H1 (cell line): ENCODE measurements at regions of chr5 and their contacts with region 1.

Region 1: GRCh38 chr5:134527146-134527960 is 1.9 kb downstream of the JADE2 start:
- DNase-seq: peak; percentile 91 to 93
- H3K4me3 ChIP-seq: peak overlapping the region; percentile 68 to 85 (median 77)
- H3K27ac ChIP-seq: peak overlapping the region; percentile 62
- H3K4me1 ChIP-seq: peaks cover 21 to 38% (median 27%) of the 10 kb centered on the region in 4 experiments
- H3K27me3 ChIP-seq: no peaks in the 10 kb centered on the region
- CTCF ChIP-seq: peak in 2 of 3 experiments; percentile 76 to 81; a peak in 3 of 4 replicates
- EP300 ChIP-seq: no peak
- POLR2A ChIP-seq: no peak; a peak in 1 of 3 replicates
- RAD21 ChIP-seq: peak; percentile 58 to 75

Region 2: DNA sequence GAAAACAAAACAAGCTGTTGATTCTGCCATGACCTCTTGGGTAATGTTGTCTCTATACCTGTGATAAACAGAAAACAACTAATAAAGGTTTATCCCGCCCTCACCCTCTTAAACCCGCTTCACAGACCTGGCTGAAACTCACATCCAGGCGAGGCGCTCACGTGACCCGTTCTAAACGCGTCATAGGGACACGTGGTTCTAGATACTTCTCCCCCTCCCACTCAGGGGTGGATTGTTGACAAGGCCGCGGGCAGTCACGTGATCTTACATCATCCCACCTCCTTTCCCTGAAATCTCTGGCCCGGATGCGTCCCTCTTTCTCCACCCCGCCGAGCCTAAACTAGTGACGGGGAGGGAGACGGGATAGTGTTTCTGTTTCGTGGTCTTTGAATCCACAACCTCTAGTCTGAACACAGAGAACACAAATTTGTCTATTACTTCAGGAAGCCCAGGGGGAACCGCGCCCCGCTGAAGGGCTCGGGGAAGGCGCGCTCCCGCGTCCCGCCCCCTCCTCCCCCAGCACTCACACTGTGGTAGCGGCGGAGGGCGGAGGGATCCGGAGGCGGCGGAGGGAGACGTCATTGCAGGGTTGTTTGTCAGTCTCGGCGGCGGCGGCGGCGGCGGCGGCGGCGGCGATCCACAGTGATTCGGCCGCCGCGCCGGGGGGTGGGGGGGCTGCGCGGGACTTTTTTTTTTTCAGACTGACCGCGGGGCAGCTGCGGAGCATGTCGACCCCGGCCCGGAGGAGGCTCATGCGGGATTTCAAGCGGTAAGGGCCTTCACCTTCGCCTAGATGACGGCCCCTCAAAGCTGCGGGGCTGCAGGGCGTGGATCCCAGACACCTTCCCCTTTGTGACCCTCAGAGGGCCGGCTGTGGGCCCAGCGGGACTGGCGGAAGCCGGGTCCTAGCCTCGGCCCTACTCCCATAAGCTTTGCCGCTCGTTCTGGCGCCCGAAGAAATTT is 156.2 kb before region 1 on chr5 and contains the start of gene UBE2B:
- CTCF ChIA-PET with region 1: interaction called, 3 read pairs
- POLR2A ChIA-PET with region 1: interaction called, 14 read pairs
- DNase-seq: peak; percentile 92 to 97
- H3K4me3 ChIP-seq: peak within 1 kb of the TSS; percentile 83 to 97 (median 91)
- H3K27ac ChIP-seq: peak within 1 kb of the TSS; percentile 98
- H3K4me1 ChIP-seq: no peaks in the 10 kb centered on the region; a peak in 3 of 7 replicates
- H3K27me3 ChIP-seq: no peaks in the 10 kb centered on the region
- CTCF ChIP-seq: no peak
- EP300 ChIP-seq: peak in 1 of 2 experiments; percentile 99; a peak in 2 of 3 replicates
- POLR2A ChIP-seq: peak; percentile 24 to 68
- RAD21 ChIP-seq: no peak
- total RNA-seq, gene UBE2B: 40.3 and 46.8 TPM in 2 replicates

Region 3: DNA sequence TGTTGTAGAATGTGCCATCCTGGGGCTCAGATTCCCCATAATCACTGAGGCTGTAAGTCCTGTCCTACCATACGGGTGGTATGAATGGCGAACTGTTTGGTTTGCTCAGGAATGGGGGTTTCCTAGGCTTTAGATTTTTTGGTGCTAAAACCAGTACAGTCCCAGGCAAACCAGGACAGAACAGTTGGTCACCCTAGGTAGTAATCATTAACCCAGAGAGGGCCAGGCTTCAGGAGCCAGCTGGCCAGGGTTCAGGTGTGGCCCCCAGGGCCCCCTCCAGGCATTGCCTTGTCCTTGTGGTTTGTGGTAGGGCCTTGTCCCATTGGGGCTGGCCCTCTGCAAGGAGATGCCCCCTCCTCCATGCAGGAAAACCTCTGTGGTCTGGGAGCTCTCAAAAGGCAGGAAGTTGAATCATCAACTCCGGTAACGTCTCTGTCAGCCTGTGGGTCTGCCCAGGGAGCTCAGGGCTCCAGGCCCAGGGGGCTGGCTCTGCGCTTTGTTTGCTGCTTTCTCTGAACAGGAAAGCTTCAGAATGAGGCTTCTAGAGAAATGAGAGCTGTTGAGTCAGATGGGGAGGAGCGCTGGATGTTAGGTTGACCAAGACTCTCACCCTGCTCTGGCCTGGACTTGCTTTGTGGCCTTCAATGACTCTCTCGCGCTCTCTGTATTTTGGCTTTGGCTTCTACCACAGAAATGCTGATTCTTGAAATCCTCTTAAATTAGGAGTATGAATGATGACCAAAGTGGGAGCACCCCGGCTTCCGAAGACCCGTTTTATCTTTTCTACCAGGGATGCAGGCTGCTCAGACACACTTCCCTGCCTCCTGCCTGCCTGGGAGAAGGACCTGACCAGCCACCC is 24.0 kb before region 1 on chr5:
- CTCF ChIA-PET with region 1: interaction called, 18 read pairs
- POLR2A ChIA-PET with region 1: interaction called, 131 read pairs
- DNase-seq: peak in 1 of 2 experiments; percentile 59
- H3K4me3 ChIP-seq: no peak overlapping the region
- H3K27ac ChIP-seq: peak overlapping the region; percentile 18; the same call in 1 of the 2 replicates
- H3K4me1 ChIP-seq: peaks cover 3 to 19% (median 16%) of the 10 kb centered on the region in 4 experiments; a peak in 6 of 7 replicates
- H3K27me3 ChIP-seq: no peaks in the 10 kb centered on the region
- CTCF ChIP-seq: no peak
- EP300 ChIP-seq: no peak
- POLR2A ChIP-seq: no peak
- RAD21 ChIP-seq: no peak

Region 4: GRCh38 chr5:134541736-134542376 is 14.5 kb after region 1 on chr5:
- CTCF ChIA-PET with region 1: interaction called, 121 read pairs
- POLR2A ChIA-PET with region 1: interaction called, 74 read pairs
- DNase-seq: peak in 1 of 2 experiments; percentile 85
- H3K4me3 ChIP-seq: no peak overlapping the region
- H3K27ac ChIP-seq: no peak overlapping the region
- H3K4me1 ChIP-seq: peaks cover 6 to 17% (median 9%) of the 10 kb centered on the region in 4 experiments
- H3K27me3 ChIP-seq: no peaks in the 10 kb centered on the region
- CTCF ChIP-seq: no peak
- EP300 ChIP-seq: no peak
- POLR2A ChIP-seq: no peak
- RAD21 ChIP-seq: peak in 1 of 2 experiments; percentile 23; a peak in 2 of 4 replicates

Region 5: DNA sequence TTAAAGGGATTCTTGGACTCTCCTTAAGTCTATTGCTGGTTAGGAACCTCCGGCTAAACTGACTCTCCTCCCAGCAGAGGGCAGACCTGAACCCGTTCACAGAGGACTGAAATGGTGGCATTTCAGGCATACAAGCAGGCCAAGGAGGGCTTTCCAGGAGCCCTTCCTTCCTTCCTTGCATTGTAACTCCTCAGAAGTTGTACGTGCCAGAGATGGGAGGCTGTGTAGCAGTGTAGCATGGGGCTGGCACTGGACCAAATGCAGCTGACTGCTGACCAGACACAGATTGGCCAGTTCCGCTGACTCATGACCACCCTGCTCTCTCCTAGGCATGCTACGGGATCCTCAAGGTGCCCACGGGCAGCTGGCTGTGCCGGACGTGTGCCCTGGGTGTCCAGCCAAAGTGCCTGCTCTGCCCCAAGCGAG is 34.5 kb after region 1 on chr5:
- CTCF ChIA-PET with region 1: interaction called, 89 read pairs
- POLR2A ChIA-PET with region 1: no interaction called
- DNase-seq: no peak
- H3K4me3 ChIP-seq: no peak overlapping the region
- H3K27ac ChIP-seq: no peak overlapping the region
- H3K4me1 ChIP-seq: no peaks in the 10 kb centered on the region
- H3K27me3 ChIP-seq: no peaks in the 10 kb centered on the region
- CTCF ChIP-seq: peak in 2 of 3 experiments; percentile 59 to 67; a peak in 3 of 4 replicates
- EP300 ChIP-seq: no peak
- POLR2A ChIP-seq: no peak
- RAD21 ChIP-seq: peak; percentile 46 to 69